GM18951 (cell line): ENCODE measurements at regions of chr3 and their contacts with region 1.

Region 1: DNA sequence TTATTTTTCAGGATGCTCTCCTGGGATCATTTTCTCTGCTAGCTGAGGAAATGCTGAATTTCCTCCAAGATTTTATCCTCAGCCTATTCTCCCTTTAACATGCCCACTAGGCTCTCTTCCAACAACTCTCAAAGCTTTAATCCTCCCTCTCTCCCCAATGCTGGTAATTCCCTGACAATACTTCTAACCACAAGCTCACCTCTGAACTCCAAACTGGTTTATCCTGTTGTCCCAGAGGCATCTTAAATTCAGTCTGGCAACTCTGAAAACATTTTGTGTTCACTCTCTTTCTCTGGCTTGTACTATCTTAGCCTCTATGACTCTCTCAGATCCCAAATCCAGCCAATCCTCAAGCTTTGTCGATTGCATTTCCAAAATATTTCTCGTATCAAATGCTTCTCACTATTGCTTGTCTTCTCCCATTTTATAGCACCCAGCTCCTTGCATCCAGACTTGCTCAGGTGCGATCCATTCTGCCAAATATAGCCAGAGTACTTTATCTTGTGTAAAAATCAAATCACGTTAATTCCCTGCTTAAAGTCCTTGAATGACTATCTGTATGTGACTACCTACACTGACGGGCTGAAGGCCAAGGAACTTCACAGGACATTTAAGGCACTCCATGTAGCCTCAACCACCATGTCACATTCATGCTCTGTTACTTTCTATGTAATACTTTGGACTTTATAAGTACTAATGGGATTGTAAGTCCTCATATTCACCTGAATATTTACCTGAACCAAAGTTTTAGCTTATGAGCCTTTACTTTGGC is 490.1 kb downstream of the MECOM start:
- POLR2A ChIP-seq: no peak

Region 2: DNA sequence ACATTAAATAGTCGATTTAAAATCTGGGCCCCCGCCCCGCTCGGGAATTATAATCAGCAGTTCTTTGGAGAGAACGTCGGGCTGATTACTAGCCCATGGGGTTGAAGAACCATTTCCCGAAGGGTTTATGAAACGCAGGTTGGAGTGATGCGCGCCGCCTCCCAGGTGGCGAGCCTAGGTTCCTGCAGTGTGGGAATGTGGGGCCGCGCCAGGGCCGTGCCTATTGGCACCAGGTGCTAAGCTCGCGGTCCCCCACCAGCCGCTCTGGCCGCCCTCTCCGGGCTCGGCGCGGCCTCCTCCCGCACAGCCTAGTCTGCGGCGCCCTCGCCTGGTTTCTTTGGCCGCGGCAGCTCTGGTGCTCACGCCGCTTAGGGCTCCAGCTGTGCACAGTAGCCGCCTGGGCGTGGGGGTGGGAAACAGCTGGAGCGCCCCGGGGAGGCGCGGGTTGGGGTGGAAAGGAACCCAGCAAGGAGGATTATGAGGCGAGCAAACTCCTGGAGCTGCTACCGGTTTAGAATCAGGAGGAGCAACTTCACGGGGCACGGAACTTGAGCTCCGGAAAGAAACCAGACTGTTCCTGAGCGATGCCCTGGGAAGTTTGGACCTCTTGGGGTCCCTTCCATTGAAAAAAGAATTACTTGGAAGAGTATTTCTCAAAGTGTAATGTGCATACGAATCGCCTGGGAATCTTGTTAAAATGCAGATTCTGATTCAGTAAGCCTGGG is 495.7 kb after region 1 on chr3:
- in situ Hi-C with region 1: loop called (anchors 25 kb)
- POLR2A ChIP-seq: no peak